ENCODE measurements at regions of chr10 and their contacts with region 1.

Region 1: GRCh38 chr10:5446390-5446926 is 34.1 kb downstream of the NET1 start:
- DNase-seq: peak; percentile 84 to 96
- H3K4me3 ChIP-seq: peak overlapping the region; percentile 74
- H3K27ac ChIP-seq: peak overlapping the region; percentile 71 to 78
- H3K4me1 ChIP-seq: peaks cover 0 to 14% of the 10 kb centered on the region in 2 donors
- H3K27me3 ChIP-seq: no peaks in the 10 kb centered on the region
- CTCF ChIP-seq: no peak

Region 2: GRCh38 chr10:5412277-5412941 is 34.0 kb before region 1 on chr10 and contains the start of gene NET1:
- intact Hi-C with region 1: loop called (anchors 5 kb)
- DNase-seq: peak; percentile 52 to 95
- H3K4me3 ChIP-seq: peak within 1 kb of the TSS; percentile 78 to 87
- H3K27ac ChIP-seq: peak within 1 kb of the TSS; percentile 88 to 96
- H3K4me1 ChIP-seq: peaks cover 0 to 6% of the 10 kb centered on the region in 2 donors
- H3K27me3 ChIP-seq: no peaks in the 10 kb centered on the region
- CTCF ChIP-seq: no peak
- total RNA-seq, gene NET1: 95.9 TPM

Region 3: DNA sequence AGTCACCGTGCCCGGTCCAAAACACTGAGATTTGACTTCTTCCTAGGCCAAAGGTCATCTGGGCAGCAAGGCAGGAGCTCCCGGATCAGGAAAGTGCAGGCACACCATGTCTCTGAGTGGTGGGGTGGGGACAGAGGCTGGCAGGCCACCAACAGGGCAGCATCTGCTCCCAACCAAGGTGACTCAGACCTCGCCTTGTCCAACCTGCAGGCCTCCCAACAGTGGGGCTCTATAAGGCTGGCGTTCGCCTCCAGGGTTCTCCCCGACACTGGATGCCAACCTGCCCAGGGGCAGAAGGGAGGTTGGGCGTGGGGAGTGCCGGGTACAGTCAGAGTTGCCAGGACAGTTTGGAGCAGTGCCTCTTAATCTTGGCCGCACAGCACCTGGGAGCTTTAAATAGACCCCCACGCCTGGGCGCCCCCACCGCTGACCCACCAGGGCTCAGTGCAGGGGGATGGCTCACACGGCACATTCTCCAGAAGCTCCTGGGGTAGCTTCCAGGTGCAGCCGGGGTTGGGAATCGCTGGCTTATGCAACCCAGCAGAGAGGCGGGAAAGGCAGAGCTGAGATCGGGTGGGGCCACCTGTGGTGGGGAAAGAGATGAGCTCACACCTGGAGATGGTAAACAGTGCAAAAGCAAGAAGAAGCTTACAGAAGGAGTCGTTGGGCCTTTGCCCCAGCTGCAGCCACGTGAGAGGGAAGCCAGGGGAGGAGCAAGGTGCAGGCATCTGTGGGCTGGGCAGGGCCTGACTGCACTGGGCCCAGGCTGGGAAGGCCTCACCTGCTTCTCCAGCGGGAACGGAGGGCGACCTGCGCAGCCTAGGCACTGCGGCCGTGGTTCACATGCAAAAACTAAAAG is 42.1 kb after region 1 on chr10:
- intact Hi-C with region 1: no loop called
- DNase-seq: no peak
- H3K4me3 ChIP-seq: no peak overlapping the region
- H3K27ac ChIP-seq: no peak overlapping the region
- H3K4me1 ChIP-seq: no peaks in the 10 kb centered on the region
- H3K27me3 ChIP-seq: no peaks in the 10 kb centered on the region
- CTCF ChIP-seq: no peak

Region 4: GRCh38 chr10:5548527-5549223 is 102.2 kb after region 1 on chr10:
- intact Hi-C with region 1: loop called (anchors 5 kb)
- DNase-seq: peak; percentile 63 to 86
- H3K4me3 ChIP-seq: no peak overlapping the region
- H3K27ac ChIP-seq: peak overlapping the region; percentile 93
- H3K4me1 ChIP-seq: peaks cover 22 to 56% of the 10 kb centered on the region in 2 donors
- H3K27me3 ChIP-seq: no peaks in the 10 kb centered on the region
- CTCF ChIP-seq: no peak

Region 5: DNA sequence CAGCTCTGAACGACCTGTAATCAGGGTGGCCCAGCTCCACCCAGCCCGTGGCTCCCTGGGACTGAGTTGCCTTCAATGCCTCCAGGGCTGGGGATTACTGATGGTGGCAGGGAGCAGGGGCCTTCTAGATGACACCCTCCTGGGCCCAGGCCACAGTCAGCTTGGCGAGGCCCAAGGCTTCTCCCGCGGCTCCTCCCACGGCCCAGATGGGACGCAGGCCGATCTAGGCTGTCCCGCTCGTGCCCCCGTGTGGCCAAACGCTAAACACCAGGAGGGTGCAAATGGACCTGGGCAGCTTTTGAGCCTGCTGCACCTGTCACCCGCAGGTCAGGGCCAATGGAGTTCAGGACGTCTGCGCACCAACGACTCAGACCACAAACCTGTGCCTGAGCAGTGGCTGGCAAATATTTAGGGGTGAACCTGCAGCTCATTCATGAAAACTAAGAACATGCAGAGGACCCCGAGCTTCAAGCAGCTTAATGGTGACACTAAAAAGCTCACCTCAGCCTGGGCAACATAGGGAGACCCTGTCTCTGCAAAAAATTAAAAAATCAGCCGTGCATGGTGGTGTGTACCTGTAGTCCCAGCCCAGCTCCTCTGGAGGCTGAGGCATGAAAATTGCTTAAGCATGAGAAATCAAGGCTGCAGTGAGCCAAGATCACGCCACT is 176.8 kb after region 1 on chr10:
- intact Hi-C with region 1: loop called (anchors 1 kb)
- DNase-seq: peak in 1 of 2 donors; percentile 93
- H3K4me3 ChIP-seq: no peak overlapping the region
- H3K27ac ChIP-seq: peak overlapping the region; percentile 52 to 65
- H3K4me1 ChIP-seq: peaks cover 12 to 51% of the 10 kb centered on the region in 2 donors
- H3K27me3 ChIP-seq: no peaks in the 10 kb centered on the region
- CTCF ChIP-seq: peak; percentile 91 to 93 (median 92)

Region 6: DNA sequence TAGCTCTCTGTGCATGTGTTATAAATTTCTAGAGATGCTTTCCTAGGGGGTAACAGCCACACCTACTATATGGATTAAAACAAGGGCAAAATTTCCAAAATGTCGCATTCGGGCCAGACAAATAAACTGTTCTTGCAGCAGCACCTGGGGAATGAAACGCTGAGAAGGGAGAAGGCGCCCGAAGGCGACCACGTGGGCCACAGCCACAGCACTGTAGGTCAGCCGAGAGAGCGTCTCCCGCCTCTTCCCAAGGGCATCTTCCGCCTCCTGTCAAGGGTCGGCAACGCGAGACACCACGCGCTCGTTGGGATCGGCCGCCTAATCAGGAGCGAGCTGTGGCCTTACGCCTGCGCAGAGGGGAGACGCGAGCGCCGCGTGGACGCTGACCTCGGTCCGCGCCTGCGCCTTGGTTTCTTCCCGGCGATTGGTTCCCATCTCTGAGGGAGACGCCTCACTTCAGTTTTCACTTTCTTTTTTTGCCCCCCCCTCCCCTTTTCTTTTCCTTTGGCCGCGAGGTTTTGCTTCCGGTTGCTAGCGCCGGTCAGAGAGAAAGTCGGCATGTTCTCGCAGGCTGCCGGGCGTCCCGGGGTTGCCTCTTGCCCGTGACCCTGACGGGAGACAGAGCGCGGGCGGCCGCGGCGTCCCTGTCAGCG is 238.0 kb after region 1 on chr10 and contains the start of gene TASOR2:
- intact Hi-C with region 1: loop called (anchors 2 kb)
- DNase-seq: peak; percentile 85 to 98
- H3K4me3 ChIP-seq: peak within 1 kb of the TSS; percentile 85 to 90
- H3K27ac ChIP-seq: peak within 1 kb of the TSS; percentile 85 to 87
- H3K4me1 ChIP-seq: peaks cover 0 to 13% of the 10 kb centered on the region in 2 donors
- H3K27me3 ChIP-seq: no peaks in the 10 kb centered on the region
- CTCF ChIP-seq: no peak
- total RNA-seq, gene TASOR2: 12.2 TPM

Region 7: DNA sequence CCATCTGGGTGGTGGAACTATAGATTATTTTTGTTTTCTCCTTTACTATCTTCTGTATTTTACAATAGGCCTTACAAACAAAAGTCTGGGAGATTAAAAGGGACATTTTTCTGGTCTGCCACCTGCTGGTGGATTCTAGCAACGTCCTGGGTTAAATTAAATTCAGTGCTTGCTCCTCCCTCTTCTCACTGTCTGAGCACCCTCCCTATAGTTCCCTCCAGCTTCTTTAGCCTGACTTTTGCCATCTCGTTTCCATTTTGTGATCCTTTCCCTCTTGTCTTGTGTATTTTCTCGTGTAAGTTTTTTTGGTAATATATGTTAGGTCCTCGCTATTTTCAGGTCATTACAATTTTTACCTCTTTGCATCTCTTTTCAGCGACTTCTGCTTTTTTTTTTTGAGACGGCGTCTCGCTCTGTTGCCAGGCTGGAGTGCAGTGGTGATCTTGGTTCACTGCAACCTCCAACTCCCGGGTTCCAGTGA is 427.1 kb after region 1 on chr10:
- intact Hi-C with region 1: loop called (anchors 5 kb)
- DNase-seq: peak in 1 of 2 donors; percentile 76
- H3K4me3 ChIP-seq: no peak overlapping the region
- H3K27ac ChIP-seq: no peak overlapping the region
- H3K4me1 ChIP-seq: no peaks in the 10 kb centered on the region
- H3K27me3 ChIP-seq: no peaks in the 10 kb centered on the region
- CTCF ChIP-seq: peak; percentile 39 to 64 (median 55)

Measured in ascending aorta (tissue), 2 donors.